A549 (cell line): ENCODE measurements at regions of chr22 and their contacts with region 1.

Region 1: DNA sequence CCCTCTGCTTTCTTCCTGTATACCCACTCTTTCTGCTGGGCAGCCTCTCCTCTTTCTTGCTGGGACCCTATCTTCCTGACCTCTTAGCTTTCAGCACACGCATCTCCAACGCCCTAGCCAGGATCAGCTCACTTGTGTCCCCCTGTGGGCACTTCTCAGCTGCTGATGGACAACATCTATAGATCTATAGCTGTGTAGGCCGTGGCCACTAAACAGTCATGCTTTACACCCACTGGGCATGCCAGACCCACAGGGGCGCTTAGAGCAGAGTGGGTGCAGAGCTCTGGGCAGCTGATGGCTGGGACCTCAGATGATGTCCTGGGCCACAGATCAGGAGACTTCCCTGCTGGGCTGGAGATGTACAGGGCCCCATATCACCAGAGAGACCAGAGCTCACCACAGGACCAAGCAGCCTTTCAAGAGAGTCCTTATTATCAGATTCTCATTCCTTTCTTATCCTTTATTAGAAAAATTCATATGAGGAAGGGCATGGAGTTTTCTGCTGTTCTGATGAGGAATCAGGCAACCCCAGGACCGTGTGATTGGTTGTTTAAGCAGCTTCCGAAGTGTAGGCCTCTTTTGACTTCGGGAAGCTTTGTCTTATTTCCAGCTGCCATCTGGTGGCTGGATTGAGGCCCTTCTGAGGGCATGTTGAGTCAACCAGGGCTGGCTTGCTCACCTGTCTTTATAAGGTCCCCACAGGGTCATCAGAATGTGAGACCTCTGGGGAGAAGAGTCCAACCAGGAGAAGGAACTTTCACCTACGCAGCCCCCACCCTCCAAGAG is 60.5 kb downstream of the OSBP2 start:
- DNase-seq: peak; percentile 69 to 73
- ATAC-seq: peak; percentile 94 to 95
- H3K4me3 ChIP-seq: no peak overlapping the region
- H3K27ac ChIP-seq: peak overlapping the region in 1 of 2 experiments; percentile 31; a peak in 2 of 6 replicates
- H3K4me1 ChIP-seq: no peaks in the 10 kb centered on the region
- CTCF ChIP-seq: peak; percentile 73
- EP300 ChIP-seq: no peak
- POLR2A ChIP-seq: no peak
- RAD21 ChIP-seq: peak; percentile 79 to 92

Region 2: DNA sequence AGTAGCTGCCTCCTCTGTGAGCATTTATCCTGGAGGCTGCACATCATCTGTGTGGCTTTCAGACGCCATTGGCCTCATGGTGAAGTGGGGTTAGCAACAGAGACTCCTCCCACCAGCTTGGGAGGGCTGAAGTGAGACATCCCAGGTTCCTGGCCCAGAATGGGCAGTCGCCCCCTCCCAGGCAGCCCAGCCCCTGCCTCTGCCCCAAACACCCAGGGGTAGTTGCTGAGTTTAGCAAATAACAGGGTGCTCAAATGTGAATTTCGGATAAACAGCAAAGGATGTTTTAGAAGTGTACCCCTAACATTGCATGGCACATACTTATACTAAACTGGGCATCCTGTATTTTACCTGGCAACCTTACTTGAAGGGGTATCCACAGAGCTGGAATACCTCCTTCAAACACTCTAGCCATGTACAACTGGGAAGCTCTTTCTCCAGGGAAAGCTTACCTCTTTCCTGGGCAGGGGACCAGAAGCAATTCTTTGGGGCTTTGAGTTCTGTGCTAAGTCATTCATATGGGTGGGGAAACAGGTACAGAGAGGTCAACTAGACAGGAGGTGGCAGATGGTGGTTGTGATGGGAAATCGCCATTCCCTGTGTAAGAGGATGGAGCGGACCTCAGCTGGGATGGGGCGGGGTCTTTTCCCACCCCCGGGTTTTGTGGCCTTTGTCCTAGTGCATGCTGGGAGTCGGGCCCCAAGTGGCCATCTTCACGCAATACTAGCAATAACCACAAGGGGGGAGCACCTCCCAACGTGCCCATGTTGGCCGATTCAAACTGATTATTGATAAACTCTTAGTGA is 310.3 kb before region 1 on chr22:
- CTCF ChIA-PET with region 1: interaction called, 15 read pairs
- POLR2A ChIA-PET with region 1: no interaction called
- DNase-seq: peak; percentile 62 to 64
- ATAC-seq: peak; percentile 85 to 88; a peak in 5 of 6 replicates
- H3K4me3 ChIP-seq: no peak overlapping the region
- H3K27ac ChIP-seq: peak overlapping the region; percentile 63 to 78
- H3K4me1 ChIP-seq: peaks cover 10% of the 10 kb centered on the region; the same call in 2 of the 3 replicates
- CTCF ChIP-seq: peak; percentile 60
- EP300 ChIP-seq: no peak
- POLR2A ChIP-seq: 0 out of 2 replicates have a peak, but pooled peaks have one; percentile 6
- RAD21 ChIP-seq: peak; percentile 70 to 76

Region 3: DNA sequence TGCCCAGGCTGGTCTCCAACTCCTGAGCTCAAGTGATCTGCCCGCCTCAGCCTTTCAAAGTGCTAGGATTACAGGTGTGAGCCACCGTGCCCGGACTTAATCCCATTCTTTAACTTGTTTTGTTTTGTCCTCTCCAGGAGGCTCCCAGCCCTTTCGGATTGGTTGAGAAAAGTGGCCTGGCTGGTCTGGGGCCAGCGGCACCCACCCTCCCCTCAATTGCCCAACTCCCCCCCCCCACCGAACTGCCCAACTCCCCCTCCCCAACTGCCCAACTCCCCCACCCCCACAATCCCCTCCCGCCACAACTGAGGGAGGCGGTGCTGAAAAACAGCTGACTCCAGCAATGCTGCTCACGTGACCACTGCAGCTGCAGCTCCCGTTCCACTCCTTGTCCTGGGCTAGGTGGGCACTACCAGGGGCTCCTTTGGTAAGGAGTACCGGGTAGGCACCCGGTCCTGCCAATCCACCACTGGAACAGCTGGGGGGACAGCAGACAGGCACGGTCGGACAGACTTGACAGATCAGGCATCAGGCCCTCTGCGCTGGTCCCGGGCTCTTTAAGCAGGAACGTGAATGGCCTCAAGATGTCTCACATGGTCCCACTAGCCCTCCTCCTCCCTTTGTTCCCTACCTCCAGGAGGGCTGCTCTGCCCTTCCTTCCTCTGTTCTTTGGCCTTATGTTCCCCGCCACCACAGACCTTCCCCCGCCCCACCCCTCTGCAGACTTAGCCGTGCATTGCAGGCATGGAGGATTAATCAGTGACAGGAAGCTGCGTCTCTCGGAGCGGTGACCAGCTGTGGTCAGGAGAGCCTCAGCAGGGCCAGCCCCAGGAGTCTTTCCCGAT is 148.5 kb before region 1 on chr22 and contains the start of gene TCN2:
- CTCF ChIA-PET with region 1: interaction called, 11 read pairs
- POLR2A ChIA-PET with region 1: no interaction called
- DNase-seq: peak; percentile 58 to 69
- ATAC-seq: peak; percentile 83 to 84
- H3K4me3 ChIP-seq: peak within 1 kb of the TSS; percentile 51
- H3K27ac ChIP-seq: peak within 1 kb of the TSS; percentile 78 to 90
- H3K4me1 ChIP-seq: peaks cover 32% of the 10 kb centered on the region
- CTCF ChIP-seq: no peak
- EP300 ChIP-seq: no peak
- POLR2A ChIP-seq: no peak
- RAD21 ChIP-seq: no peak
- polyA plus RNA-seq, gene TCN2: 4.3 and 5.6 TPM in 2 replicates

Region 4: GRCh38 chr22:30634471-30635233 is 120.5 kb before region 1 on chr22:
- CTCF ChIA-PET with region 1: interaction called, 129 read pairs
- POLR2A ChIA-PET with region 1: interaction called, 10 read pairs
- DNase-seq: peak; percentile 86 to 88
- ATAC-seq: peak; percentile 81 to 84
- H3K4me3 ChIP-seq: peak overlapping the region; percentile 80
- H3K27ac ChIP-seq: peak overlapping the region; percentile 67 to 97
- H3K4me1 ChIP-seq: peaks cover 21% of the 10 kb centered on the region
- CTCF ChIP-seq: peak; percentile 78
- EP300 ChIP-seq: no peak
- POLR2A ChIP-seq: no peak
- RAD21 ChIP-seq: peak; percentile 79 to 81

Region 5: DNA sequence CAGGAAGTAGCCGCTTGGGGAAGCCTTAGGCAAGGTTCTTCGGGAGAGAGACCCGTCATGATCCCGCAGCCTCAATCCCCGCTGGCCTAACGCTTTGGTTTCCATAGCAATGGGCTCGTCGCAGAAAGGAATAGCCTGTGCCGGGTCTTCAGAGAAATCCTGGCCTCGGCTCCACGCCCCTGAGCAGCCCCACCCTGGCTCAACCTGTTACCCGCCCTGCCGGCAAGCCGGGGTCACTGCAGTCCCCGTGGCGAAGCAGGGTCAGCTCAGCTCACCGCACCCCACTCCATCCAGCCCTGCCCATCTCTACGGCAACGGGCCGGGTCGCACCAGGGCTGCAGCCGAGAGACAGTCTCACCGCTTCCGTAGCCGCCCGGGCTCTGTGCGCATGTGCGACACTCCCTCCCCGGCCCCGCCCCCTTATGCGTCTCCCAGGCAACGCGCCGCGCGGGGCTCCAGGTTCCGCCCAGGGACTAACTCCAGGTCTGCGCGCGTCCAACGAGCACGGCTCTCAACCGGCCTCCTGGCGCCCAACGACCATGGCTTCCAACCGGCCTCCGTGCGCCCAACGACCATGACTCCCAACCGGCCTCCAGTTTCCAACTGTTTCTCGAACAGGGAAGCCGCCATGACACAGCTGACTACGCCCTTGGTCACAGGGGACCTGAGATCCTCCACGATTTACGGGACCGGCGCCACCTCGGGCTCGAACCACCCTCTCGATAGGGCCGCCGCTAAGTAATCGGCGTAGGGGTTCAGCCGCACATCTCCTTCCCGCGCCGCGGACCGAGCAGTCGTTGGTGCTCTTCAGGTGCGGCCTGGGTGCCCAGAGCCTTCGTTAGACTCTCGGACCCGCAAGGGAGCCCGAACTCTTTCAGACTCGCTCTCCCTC is 87.4 kb before region 1 on chr22 and contains the start of gene DUSP18:
- CTCF ChIA-PET with region 1: interaction called, 12 read pairs
- POLR2A ChIA-PET with region 1: no interaction called
- DNase-seq: peak; percentile 90 to 93
- ATAC-seq: peak; percentile 95 to 97
- H3K4me3 ChIP-seq: peak within 1 kb of the TSS; percentile 69
- H3K27ac ChIP-seq: peak within 1 kb of the TSS; percentile 69 to 88
- H3K4me1 ChIP-seq: peaks cover 6% of the 10 kb centered on the region; the same call in 1 of the 3 replicates
- CTCF ChIP-seq: no peak
- EP300 ChIP-seq: no peak
- POLR2A ChIP-seq: peak; percentile 63
- RAD21 ChIP-seq: no peak
- polyA plus RNA-seq, gene DUSP18: 7.2 and 8.4 TPM in 2 replicates

Region 6: DNA sequence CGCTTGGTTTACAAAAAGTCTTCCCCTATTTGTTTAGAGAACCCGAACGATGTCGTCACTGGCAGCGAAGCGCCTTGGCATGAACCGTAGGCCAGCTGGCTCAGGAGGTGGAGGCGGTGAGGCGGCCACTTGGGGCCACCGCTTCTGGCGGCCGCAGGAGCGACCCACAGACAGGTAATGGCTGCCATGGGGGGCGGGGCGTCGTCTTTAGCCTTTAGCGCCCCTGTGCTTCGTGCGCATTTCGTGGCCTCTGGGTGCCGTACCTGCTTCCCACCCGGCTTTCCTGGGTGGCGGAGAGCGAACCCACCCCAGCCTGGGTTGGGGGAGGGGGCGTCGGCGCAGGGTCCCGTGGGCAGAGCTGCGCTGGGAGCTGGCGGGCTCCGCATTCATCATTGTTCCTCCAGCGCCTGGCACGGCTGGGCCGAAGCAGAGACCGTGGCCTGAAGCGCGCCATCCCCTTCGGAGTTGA is 61.0 kb before region 1 on chr22:
- CTCF ChIA-PET with region 1: interaction called, 15 read pairs
- POLR2A ChIA-PET with region 1: no interaction called
- DNase-seq: peak; percentile 47 to 63
- ATAC-seq: peak; percentile 90 to 95
- H3K4me3 ChIP-seq: peak overlapping the region; percentile 74
- H3K27ac ChIP-seq: peak overlapping the region; percentile 85 to 86
- H3K4me1 ChIP-seq: peaks cover 5% of the 10 kb centered on the region; the same call in 1 of the 3 replicates
- CTCF ChIP-seq: no peak
- EP300 ChIP-seq: no peak
- POLR2A ChIP-seq: no peak
- RAD21 ChIP-seq: no peak

Region 7: GRCh38 chr22:30742291-30743256 is 12.6 kb before region 1 on chr22:
- CTCF ChIA-PET with region 1: interaction called, 22 read pairs
- POLR2A ChIA-PET with region 1: no interaction called
- DNase-seq: no peak
- ATAC-seq: no peak
- H3K4me3 ChIP-seq: no peak overlapping the region
- H3K27ac ChIP-seq: no peak overlapping the region
- H3K4me1 ChIP-seq: no peaks in the 10 kb centered on the region
- CTCF ChIP-seq: no peak
- EP300 ChIP-seq: no peak
- POLR2A ChIP-seq: no peak
- RAD21 ChIP-seq: no peak